H1 (cell line): ENCODE measurements at regions of chr15 and their contacts with region 1.

Region 1: GRCh38 chr15:32994810-32995424 is 199.6 kb downstream of the FMN1 start:
- DNase-seq: no peak
- H3K4me3 ChIP-seq: no peak overlapping the region
- H3K27ac ChIP-seq: no peak overlapping the region
- H3K4me1 ChIP-seq: no peaks in the 10 kb centered on the region; a peak in 1 of 7 replicates
- H3K27me3 ChIP-seq: no peaks in the 10 kb centered on the region
- CTCF ChIP-seq: peak in 2 of 3 experiments; percentile 15 to 42; a peak in 2 of 4 replicates
- EP300 ChIP-seq: no peak
- POLR2A ChIP-seq: no peak
- RAD21 ChIP-seq: peak in 1 of 2 experiments; percentile 68

Region 2: GRCh38 chr15:32651229-32651837 is 343.6 kb before region 1 on chr15:
- CTCF ChIA-PET with region 1: interaction called, 17 read pairs
- POLR2A ChIA-PET with region 1: interaction called, 3 read pairs
- DNase-seq: peak in 1 of 2 experiments; percentile 73
- H3K4me3 ChIP-seq: no peak overlapping the region
- H3K27ac ChIP-seq: no peak overlapping the region
- H3K4me1 ChIP-seq: peaks cover 0 to 12% (median 2%) of the 10 kb centered on the region in 4 experiments; a peak in 4 of 7 replicates
- H3K27me3 ChIP-seq: no peaks in the 10 kb centered on the region
- CTCF ChIP-seq: peak; percentile 94 to 98 (median 97)
- EP300 ChIP-seq: no peak
- POLR2A ChIP-seq: no peak
- RAD21 ChIP-seq: peak; percentile 85 to 92

Region 3: GRCh38 chr15:32664796-32665195 is 330.1 kb before region 1 on chr15:
- CTCF ChIA-PET with region 1: interaction called, 100 read pairs
- POLR2A ChIA-PET with region 1: no interaction called
- DNase-seq: no peak
- H3K4me3 ChIP-seq: no peak overlapping the region
- H3K27ac ChIP-seq: no peak overlapping the region
- H3K4me1 ChIP-seq: peaks cover under 1 to 7% (median 3%) of the 10 kb centered on the region in 4 experiments
- H3K27me3 ChIP-seq: no peaks in the 10 kb centered on the region
- CTCF ChIP-seq: no peak
- EP300 ChIP-seq: no peak
- POLR2A ChIP-seq: no peak
- RAD21 ChIP-seq: no peak

Region 4: DNA sequence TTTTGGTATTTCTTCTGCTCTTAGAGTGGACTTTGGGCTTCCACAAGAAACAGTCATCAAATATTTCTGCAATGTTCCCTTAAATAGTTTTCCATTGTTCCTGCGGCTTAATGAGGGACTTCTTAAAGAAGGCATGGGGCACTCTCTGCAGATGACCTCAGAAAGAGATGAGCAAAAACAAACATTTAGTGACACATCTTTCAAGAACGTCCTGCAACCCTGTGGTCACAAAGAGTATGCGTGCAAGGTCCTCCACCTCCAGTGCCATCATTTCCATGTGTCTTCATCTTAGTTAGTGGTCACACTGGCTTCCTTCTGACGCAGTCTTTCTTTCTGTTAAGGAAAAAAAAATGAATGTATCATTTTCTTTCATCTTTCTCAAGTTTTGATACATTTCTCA is 220.9 kb before region 1 on chr15:
- CTCF ChIA-PET with region 1: no interaction called
- POLR2A ChIA-PET with region 1: no interaction called
- DNase-seq: no peak
- H3K4me3 ChIP-seq: no peak overlapping the region
- H3K27ac ChIP-seq: no peak overlapping the region
- H3K4me1 ChIP-seq: no peaks in the 10 kb centered on the region
- H3K27me3 ChIP-seq: no peaks in the 10 kb centered on the region
- CTCF ChIP-seq: no peak
- EP300 ChIP-seq: no peak
- POLR2A ChIP-seq: no peak
- RAD21 ChIP-seq: no peak

Region 5: DNA sequence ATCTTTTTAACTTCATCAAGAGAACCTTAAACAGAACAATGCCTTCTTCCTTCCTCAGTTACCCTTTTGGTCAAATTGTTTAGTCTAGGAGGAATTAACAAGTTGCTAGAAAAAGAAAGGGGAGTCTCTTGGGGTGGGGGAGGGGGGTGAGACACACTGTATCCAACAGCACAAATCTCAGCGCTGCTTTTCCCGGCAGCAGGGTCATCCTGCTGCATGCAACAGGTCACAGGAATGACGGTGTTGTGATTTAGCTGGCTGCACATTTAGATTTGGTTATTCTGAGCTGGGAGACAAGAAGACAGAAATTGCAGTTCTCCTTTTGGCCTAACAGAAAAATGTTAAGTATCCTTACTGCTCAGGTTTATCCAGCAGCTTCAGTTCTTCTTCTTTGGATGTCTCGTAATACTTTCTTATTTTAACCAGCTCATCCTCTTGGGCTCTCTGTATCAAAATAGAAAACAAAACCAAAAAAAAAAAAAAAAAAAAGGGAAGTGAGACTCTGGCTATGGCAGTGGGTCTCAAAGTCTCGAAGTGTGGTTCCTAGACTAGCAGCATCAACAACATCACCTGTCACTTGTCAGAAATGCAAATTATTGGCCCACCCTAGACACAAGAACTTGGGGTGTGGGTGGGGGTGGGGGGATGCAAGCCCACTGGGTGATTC is 86.6 kb before region 1 on chr15:
- CTCF ChIA-PET with region 1: interaction called, 12 read pairs
- POLR2A ChIA-PET with region 1: no interaction called
- DNase-seq: no peak
- H3K4me3 ChIP-seq: no peak overlapping the region
- H3K27ac ChIP-seq: no peak overlapping the region
- H3K4me1 ChIP-seq: peaks cover 0 to 4% (median 0%) of the 10 kb centered on the region in 4 experiments; a peak in 2 of 7 replicates
- H3K27me3 ChIP-seq: no peaks in the 10 kb centered on the region
- CTCF ChIP-seq: no peak
- EP300 ChIP-seq: no peak
- POLR2A ChIP-seq: no peak
- RAD21 ChIP-seq: no peak

Region 6: GRCh38 chr15:32981536-32981935 is 13.4 kb before region 1 on chr15:
- CTCF ChIA-PET with region 1: interaction called, 22 read pairs
- POLR2A ChIA-PET with region 1: no interaction called
- DNase-seq: no peak
- H3K4me3 ChIP-seq: no peak overlapping the region
- H3K27ac ChIP-seq: no peak overlapping the region
- H3K4me1 ChIP-seq: no peaks in the 10 kb centered on the region
- H3K27me3 ChIP-seq: no peaks in the 10 kb centered on the region
- CTCF ChIP-seq: no peak
- EP300 ChIP-seq: no peak
- POLR2A ChIP-seq: no peak
- RAD21 ChIP-seq: no peak

Region 7: GRCh38 chr15:33045066-33045810 is 50.3 kb after region 1 on chr15:
- CTCF ChIA-PET with region 1: no interaction called
- POLR2A ChIA-PET with region 1: no interaction called
- DNase-seq: no peak
- H3K4me3 ChIP-seq: no peak overlapping the region
- H3K27ac ChIP-seq: no peak overlapping the region
- H3K4me1 ChIP-seq: no peaks in the 10 kb centered on the region
- H3K27me3 ChIP-seq: no peaks in the 10 kb centered on the region
- CTCF ChIP-seq: no peak
- EP300 ChIP-seq: no peak
- POLR2A ChIP-seq: no peak
- RAD21 ChIP-seq: no peak

Region 8: GRCh38 chr15:33080006-33080405 is 85.1 kb after region 1 on chr15:
- CTCF ChIA-PET with region 1: interaction called, 10 read pairs
- POLR2A ChIA-PET with region 1: no interaction called
- DNase-seq: no peak
- H3K4me3 ChIP-seq: no peak overlapping the region
- H3K27ac ChIP-seq: no peak overlapping the region
- H3K4me1 ChIP-seq: peaks cover 0 to 15% (median 6%) of the 10 kb centered on the region in 4 experiments; a peak in 5 of 7 replicates
- H3K27me3 ChIP-seq: no peaks in the 10 kb centered on the region
- CTCF ChIP-seq: no peak
- EP300 ChIP-seq: no peak
- POLR2A ChIP-seq: no peak
- RAD21 ChIP-seq: no peak